Activated CD4-positive, alpha-beta T cell treated with anti-CD3 and anti-CD28 coated beads for 36 hours (primary cell): ENCODE measurements at regions of chr6 and their contacts with region 1.

Region 1: GRCh38 chr6:33454009-33454946 is at the start of gene ZBTB9:
- DNase-seq: peak; percentile 96
- ATAC-seq: peak; percentile 100
- H3K4me3 Mint-ChIP-seq: peak within 1 kb of the TSS; percentile 95
- H3K27ac Mint-ChIP-seq: peak within 1 kb of the TSS; percentile 82
- H3K4me1 Mint-ChIP-seq: peaks cover 27% of the 10 kb centered on the region
- H3K27me3 Mint-ChIP-seq: no peaks in the 10 kb centered on the region
- total RNA-seq, gene ZBTB9: 9.3 to 9.5 TPM

Region 2: GRCh38 chr6:33323623-33323948 is 130.7 kb before region 1 on chr6:
- CTCF ChIA-PET with region 1: interaction called, 3 read pairs
- POLR2A ChIA-PET with region 1: interaction called, 7 read pairs
- intact Hi-C with region 1: loop called in 1 of 2 experiments (anchors 1 kb)
- DNase-seq: no peak
- ATAC-seq: no peak
- H3K4me3 Mint-ChIP-seq: peak overlapping the region; percentile 99
- H3K27ac Mint-ChIP-seq: peak overlapping the region; percentile 99
- H3K4me1 Mint-ChIP-seq: peaks cover 46% of the 10 kb centered on the region
- H3K27me3 Mint-ChIP-seq: no peaks in the 10 kb centered on the region

Region 3: GRCh38 chr6:33384581-33385020 is 69.7 kb before region 1 on chr6:
- CTCF ChIA-PET with region 1: no interaction called
- POLR2A ChIA-PET with region 1: no interaction called
- intact Hi-C with region 1: no loop called
- DNase-seq: no peak
- ATAC-seq: no peak
- H3K4me3 Mint-ChIP-seq: no peak overlapping the region
- H3K27ac Mint-ChIP-seq: no peak overlapping the region
- H3K4me1 Mint-ChIP-seq: no peaks in the 10 kb centered on the region
- H3K27me3 Mint-ChIP-seq: no peaks in the 10 kb centered on the region

Region 4: GRCh38 chr6:33410050-33410710 is 44.1 kb before region 1 on chr6:
- CTCF ChIA-PET with region 1: no interaction called
- POLR2A ChIA-PET with region 1: interaction called, 5 read pairs
- intact Hi-C with region 1: loop called in 1 of 2 experiments (anchors 1 kb)
- DNase-seq: peak; percentile 98
- ATAC-seq: peak; percentile 88
- H3K4me3 Mint-ChIP-seq: peak overlapping the region; percentile 80
- H3K27ac Mint-ChIP-seq: peak overlapping the region; percentile 96
- H3K4me1 Mint-ChIP-seq: peaks cover 31% of the 10 kb centered on the region
- H3K27me3 Mint-ChIP-seq: no peaks in the 10 kb centered on the region

Region 5: GRCh38 chr6:33425668-33426577 is 28.4 kb before region 1 on chr6:
- CTCF ChIA-PET with region 1: interaction called, 6 read pairs
- POLR2A ChIA-PET with region 1: interaction called, 6 read pairs
- intact Hi-C with region 1: loop called (anchors 1 to 2 kb)
- DNase-seq: peak; percentile 93
- ATAC-seq: peak; percentile 49
- H3K4me3 Mint-ChIP-seq: peak overlapping the region; percentile 88
- H3K27ac Mint-ChIP-seq: peak overlapping the region; percentile 90
- H3K4me1 Mint-ChIP-seq: peaks cover 65% of the 10 kb centered on the region
- H3K27me3 Mint-ChIP-seq: no peaks in the 10 kb centered on the region

Region 6: DNA sequence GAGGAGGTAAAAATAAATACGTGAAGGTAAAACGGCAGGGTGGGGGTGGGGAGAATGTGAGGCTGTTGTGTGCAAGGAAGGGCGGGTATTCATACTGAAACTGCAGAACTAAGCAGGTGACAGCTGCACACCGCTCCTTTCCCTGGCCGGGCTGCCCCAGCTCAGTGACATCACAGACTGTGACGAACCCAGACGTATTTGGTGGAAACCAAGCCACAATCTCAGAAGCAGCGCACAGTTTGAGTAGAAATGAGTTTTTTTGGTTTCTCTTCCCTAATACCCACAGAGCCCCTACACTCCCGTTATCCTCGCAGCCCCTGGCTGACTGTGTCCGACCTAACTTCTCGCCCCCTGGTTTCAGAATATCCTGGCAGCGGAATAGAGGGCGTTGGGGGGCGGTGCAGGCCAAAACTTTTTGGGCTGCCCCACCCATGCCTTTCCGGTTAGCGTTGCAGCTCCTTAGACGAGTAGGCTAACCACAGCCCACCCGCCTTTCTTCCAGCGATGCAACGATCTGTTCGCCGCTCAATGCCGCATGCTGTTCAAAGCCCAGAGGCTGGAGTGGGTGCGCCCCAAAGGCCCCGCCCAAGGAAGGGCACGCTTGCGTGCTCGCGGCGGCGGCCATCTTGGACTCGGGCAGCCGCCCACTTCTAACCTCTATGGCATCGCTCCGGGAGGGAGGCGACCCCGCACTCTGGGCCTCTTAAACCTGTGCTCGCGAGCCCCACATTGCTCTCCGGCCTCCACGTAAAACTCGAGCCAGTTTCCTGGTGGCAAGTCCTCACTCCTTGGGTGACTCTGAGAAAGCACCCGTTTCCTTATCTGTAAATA is 116.7 kb after region 1 on chr6:
- CTCF ChIA-PET with region 1: no interaction called
- POLR2A ChIA-PET with region 1: interaction called, 3 read pairs
- intact Hi-C with region 1: loop called (anchors 1 kb)
- DNase-seq: peak; percentile 98
- ATAC-seq: peak; percentile 90
- H3K4me3 Mint-ChIP-seq: peak overlapping the region; percentile 81
- H3K27ac Mint-ChIP-seq: peak overlapping the region; percentile 100
- H3K4me1 Mint-ChIP-seq: peaks cover 42% of the 10 kb centered on the region
- H3K27me3 Mint-ChIP-seq: no peaks in the 10 kb centered on the region

Region 7: GRCh38 chr6:33694401-33694931 is 240.2 kb after region 1 on chr6:
- CTCF ChIA-PET with region 1: no interaction called
- POLR2A ChIA-PET with region 1: no interaction called
- intact Hi-C with region 1: loop called in 1 of 2 experiments (anchors 5 kb)
- DNase-seq: peak; percentile 86
- ATAC-seq: peak; percentile 83
- H3K4me3 Mint-ChIP-seq: peak overlapping the region; percentile 2
- H3K27ac Mint-ChIP-seq: peak overlapping the region; percentile 84
- H3K4me1 Mint-ChIP-seq: peaks cover 83% of the 10 kb centered on the region
- H3K27me3 Mint-ChIP-seq: no peaks in the 10 kb centered on the region

Region 8: DNA sequence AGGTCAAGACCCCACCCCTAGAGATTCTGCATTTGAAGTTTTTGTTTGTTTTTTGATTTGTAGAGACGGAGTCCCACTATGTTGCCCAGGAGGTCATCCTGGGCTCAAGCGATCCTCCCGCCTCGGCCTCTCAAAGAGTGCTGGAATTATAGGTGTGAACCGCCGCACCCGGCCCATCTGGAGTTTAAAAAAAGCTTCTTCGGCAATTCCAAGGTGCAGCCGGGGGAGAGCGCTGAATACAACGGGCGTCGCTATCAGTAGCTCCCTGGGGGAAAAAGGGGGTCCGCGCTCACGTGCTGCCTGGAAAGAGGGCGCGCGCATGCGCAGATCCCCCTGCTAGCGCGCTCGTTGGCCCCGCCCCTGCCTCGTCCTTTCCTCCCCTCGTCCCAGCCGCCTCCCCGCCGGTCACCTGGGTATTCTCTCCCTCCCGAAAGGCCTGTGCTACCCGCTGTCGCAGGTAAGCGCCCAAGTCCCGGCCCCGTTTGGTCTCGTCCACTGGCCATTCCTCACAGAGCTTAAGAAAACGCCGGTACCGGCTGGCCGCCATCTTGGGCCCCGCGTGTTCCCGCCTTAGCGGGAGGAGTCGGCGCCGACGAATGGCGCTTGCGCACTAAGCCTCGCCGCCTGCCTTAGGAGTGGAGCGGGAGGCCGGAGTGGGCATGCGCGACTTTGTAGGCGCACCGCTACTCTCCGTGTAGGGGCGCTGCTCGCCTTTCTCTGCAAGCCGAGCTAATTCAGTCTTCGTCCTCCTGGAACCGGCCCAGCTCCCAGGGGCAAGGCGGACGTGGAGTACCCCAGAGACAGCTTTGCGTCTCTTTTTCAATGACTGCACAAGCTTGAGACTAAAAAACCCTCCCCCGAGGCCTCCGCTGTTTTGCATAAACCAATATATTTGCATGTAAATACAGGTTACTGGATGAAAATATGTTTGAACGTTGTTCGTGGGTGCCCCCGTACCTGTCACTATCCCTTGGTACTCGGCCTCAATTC is 257.2 kb after region 1 on chr6 and contains the start of gene UQCC2:
- CTCF ChIA-PET with region 1: interaction called, 4 read pairs
- POLR2A ChIA-PET with region 1: no interaction called
- intact Hi-C with region 1: loop called in 1 of 2 experiments (anchors 1 kb)
- DNase-seq: peak; percentile 99
- ATAC-seq: peak; percentile 99
- H3K4me3 Mint-ChIP-seq: peak within 1 kb of the TSS; percentile 90
- H3K27ac Mint-ChIP-seq: peak within 1 kb of the TSS; percentile 96
- H3K4me1 Mint-ChIP-seq: peaks cover 34% of the 10 kb centered on the region
- H3K27me3 Mint-ChIP-seq: no peaks in the 10 kb centered on the region
- total RNA-seq, gene UQCC2: 141 to 147 TPM